ENCODE measurements at regions of chr10 and their contacts with region 1.

Region 1: GRCh38 chr10:91908337-91909116 is 759 bp downstream of the FGFBP3 start:
- DNase-seq: peak; percentile 71
- H3K4me3 ChIP-seq: peak overlapping the region; percentile 65 to 68 (median 67)
- H3K27ac ChIP-seq: no peak overlapping the region
- H3K4me1 ChIP-seq: peaks cover 15% of the 10 kb centered on the region
- H3K27me3 ChIP-seq: no peaks in the 10 kb centered on the region
- CTCF ChIP-seq: peak; percentile 13 to 38

Region 2: DNA sequence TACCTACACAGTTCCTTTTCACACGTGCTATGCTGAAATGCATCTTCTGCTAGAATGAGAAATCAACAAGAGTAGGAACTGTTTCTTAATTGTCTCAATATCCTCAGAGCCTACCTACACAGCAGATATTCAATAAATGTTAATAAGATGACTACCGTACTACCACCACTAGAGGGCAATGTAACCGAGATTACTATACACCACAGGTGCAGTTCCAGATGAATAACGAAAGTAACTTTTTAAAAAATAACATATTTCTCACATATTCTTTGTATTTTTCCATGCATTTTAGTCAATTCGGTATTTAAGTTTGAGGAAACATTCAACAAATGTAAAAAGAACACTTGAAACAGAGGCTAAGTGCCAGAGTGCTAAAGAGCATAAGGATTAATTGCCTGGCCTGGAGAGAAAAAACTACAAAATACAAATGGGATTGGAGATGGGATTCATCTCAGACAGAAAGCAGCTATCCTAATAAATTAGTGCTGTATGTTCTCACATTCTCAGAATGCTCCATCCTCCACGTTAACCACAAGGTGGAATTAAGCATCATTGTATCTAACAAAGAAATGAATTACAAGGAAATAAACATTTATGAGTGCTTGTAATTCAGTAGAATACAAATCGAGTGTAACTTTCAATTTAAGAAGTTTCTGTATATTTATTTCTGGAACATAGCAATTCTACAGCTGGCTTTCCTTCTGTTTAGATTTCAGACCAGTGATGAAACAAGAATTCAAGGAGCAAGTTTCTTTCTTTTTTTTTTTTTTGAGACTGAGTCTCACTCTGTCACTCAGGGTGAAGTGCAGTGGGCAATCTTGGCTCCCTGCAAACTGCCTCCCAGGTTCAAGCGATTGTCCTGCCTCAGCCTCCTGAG is 518.7 kb before region 1 on chr10:
- CTCF ChIA-PET with region 1: no interaction called
- dilution Hi-C with region 1: no loop called
- in situ Hi-C with region 1: no loop called
- intact Hi-C with region 1: loop called (anchors 5 kb)
- DNase-seq: peak; percentile 36
- H3K4me3 ChIP-seq: no peak overlapping the region
- H3K27ac ChIP-seq: no peak overlapping the region
- H3K4me1 ChIP-seq: no peaks in the 10 kb centered on the region
- H3K27me3 ChIP-seq: peaks cover 2% of the 10 kb centered on the region
- CTCF ChIP-seq: peak; percentile 54 to 55

Region 3: DNA sequence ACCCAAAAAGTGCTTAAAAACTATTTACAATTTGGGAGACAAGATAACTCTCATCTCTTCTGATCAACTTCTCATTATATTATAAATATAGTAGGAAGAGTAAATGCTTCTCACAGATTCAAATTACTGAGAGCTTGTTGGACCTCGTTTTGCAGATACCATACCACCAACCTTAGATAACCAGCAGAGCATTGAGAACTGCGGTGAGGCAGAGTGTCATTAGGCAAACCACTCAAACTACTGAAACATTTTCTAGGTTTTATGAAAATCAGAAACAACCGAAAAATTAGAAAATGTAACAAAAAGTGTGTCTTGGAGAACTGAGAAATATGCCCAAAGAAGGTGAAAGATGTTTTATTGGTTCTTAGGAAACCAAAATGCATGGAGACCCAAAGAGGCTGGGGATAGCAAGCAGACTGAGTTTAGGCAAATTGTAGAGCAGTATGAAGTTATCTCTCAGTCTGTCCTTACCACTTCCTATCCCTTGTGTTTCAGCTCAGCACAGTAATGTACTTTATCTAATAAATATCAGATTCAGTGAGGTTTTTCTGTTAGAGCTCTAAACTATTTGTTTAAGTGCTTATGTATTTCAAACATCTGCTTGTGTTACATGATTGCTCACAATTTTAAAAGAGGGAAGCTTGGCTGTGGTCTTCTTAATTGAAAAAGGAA is 420.5 kb before region 1 on chr10:
- CTCF ChIA-PET with region 1: no interaction called
- dilution Hi-C with region 1: no loop called
- in situ Hi-C with region 1: no loop called
- intact Hi-C with region 1: loop called (anchors 10 kb)
- DNase-seq: no peak
- H3K4me3 ChIP-seq: no peak overlapping the region
- H3K27ac ChIP-seq: no peak overlapping the region
- H3K4me1 ChIP-seq: no peaks in the 10 kb centered on the region
- H3K27me3 ChIP-seq: no peaks in the 10 kb centered on the region
- CTCF ChIP-seq: no peak

Region 4: DNA sequence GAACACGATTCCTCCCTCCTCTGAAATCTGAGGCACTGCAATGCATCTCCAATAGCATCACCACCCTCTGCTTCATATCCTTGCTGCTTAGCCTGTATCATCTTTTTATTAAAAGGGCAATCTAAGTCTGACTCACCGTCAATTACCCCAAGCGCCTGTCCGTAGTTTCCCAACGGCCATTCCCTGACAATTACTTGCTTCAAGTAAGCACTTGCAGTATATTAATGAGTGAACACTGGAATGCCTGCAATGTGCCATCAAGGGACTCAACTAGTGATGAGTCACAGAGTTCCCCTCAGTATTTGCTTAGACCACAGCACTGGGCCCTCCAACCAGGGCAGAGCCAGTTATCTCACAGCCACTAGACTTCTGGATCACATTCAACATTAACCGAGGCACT is 256.2 kb before region 1 on chr10:
- CTCF ChIA-PET with region 1: no interaction called
- dilution Hi-C with region 1: no loop called
- in situ Hi-C with region 1: no loop called
- intact Hi-C with region 1: no loop called
- DNase-seq: peak; percentile 98
- H3K4me3 ChIP-seq: peak overlapping the region in 1 of 3 experiments; percentile 51
- H3K27ac ChIP-seq: peak overlapping the region; percentile 98
- H3K4me1 ChIP-seq: peaks cover 34% of the 10 kb centered on the region
- H3K27me3 ChIP-seq: no peaks in the 10 kb centered on the region
- CTCF ChIP-seq: no peak

Region 5: DNA sequence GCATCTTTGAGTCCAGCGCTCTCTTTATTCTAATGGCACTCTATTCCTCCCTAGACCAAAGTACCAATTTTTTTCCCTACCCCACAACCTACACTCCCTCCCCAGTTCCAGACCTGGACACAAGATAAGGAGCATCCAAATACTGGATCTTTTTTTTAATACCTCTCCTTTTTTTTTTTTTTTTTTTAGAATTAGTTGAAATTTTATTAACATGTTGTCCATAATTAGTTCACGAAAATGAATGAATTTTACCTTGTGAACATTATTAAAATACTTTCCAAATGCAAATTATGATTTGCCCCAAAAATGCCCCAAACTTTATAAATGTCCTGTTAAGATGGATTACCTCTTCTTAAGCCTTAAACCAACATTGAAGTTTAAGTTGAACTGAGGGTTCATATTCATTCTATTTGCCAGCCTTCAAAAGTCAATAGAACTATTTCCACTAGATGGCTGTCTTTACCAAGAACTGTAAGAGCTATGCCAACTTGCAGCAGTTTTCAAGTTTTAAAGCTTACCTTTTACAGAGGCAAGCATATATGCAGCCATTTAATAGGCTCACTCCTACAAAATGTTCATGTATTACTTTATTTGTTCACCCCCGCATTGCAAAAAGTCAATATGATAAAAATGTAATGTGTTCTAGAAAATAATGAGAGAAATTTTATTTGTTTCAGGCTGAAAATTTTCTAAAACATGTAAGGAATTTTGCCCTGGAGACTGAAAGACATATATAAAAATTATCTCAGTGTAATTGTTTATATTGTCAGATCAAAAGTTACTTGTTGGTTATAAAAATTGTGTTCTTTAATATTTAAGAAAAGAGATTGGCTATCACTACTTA is 150.0 kb before region 1 on chr10:
- CTCF ChIA-PET with region 1: no interaction called
- dilution Hi-C with region 1: no loop called
- in situ Hi-C with region 1: loop called in 1 of 2 experiments (anchors 10 kb)
- intact Hi-C with region 1: loop called (anchors 1 kb)
- DNase-seq: peak; percentile 48
- H3K4me3 ChIP-seq: no peak overlapping the region
- H3K27ac ChIP-seq: no peak overlapping the region
- H3K4me1 ChIP-seq: no peaks in the 10 kb centered on the region
- H3K27me3 ChIP-seq: peaks cover 3% of the 10 kb centered on the region
- CTCF ChIP-seq: peak; percentile 68 to 70

Region 6: GRCh38 chr10:91838199-91838598 is 70.3 kb before region 1 on chr10:
- CTCF ChIA-PET with region 1: no interaction called
- dilution Hi-C with region 1: no loop called
- in situ Hi-C with region 1: no loop called
- intact Hi-C with region 1: no loop called
- DNase-seq: no peak
- H3K4me3 ChIP-seq: no peak overlapping the region
- H3K27ac ChIP-seq: no peak overlapping the region
- H3K4me1 ChIP-seq: no peaks in the 10 kb centered on the region
- H3K27me3 ChIP-seq: no peaks in the 10 kb centered on the region
- CTCF ChIP-seq: no peak

Region 7: DNA sequence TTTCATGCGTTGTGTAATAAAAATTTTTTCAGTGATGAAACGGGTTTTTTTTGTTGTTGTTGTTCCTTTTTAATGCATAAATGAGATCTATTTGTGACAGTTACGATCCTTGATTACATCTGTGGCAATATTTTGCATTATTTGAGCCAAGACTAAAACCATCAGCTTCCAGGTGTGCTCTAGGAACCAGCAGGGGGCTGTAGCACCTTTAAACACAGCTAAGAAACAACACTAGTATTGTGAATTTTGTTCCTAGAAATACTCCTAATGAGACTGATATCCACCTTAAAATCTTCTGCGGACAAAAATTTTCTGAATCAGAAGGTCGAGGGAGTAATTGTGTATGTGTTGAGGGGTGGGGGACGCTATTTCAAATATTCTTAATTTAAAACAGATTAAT is 51.9 kb before region 1 on chr10:
- CTCF ChIA-PET with region 1: no interaction called
- dilution Hi-C with region 1: no loop called
- in situ Hi-C with region 1: no loop called
- intact Hi-C with region 1: loop called (anchors 1 kb)
- DNase-seq: no peak
- H3K4me3 ChIP-seq: no peak overlapping the region
- H3K27ac ChIP-seq: no peak overlapping the region
- H3K4me1 ChIP-seq: no peaks in the 10 kb centered on the region
- H3K27me3 ChIP-seq: no peaks in the 10 kb centered on the region
- CTCF ChIP-seq: peak; percentile 36 to 53

Region 8: GRCh38 chr10:91893051-91893450 is 15.5 kb before region 1 on chr10:
- CTCF ChIA-PET with region 1: no interaction called
- dilution Hi-C with region 1: no loop called
- in situ Hi-C with region 1: no loop called
- intact Hi-C with region 1: no loop called
- DNase-seq: no peak
- H3K4me3 ChIP-seq: no peak overlapping the region
- H3K27ac ChIP-seq: no peak overlapping the region
- H3K4me1 ChIP-seq: no peaks in the 10 kb centered on the region
- H3K27me3 ChIP-seq: no peaks in the 10 kb centered on the region
- CTCF ChIP-seq: no peak

Measured in mammary epithelial cell (primary cell).